Prostate gland (tissue), 2 donors: ENCODE measurements at regions of chr10 and their contacts with region 1.

Region 1: GRCh38 chr10:61903221-61903927 is 1.9 kb downstream of the ARID5B start:
- DNase-seq: peak; percentile 61
- H3K4me3 ChIP-seq: peak overlapping the region; percentile 58 to 85
- H3K27ac ChIP-seq: peak overlapping the region; percentile 98
- H3K4me1 ChIP-seq: peaks cover 2% of the 10 kb centered on the region
- H3K27me3 ChIP-seq: no peaks in the 10 kb centered on the region
- CTCF ChIP-seq: peak in 2 of 4 experiments; percentile 21 to 37
- POLR2A ChIP-seq: no peak

Region 2: DNA sequence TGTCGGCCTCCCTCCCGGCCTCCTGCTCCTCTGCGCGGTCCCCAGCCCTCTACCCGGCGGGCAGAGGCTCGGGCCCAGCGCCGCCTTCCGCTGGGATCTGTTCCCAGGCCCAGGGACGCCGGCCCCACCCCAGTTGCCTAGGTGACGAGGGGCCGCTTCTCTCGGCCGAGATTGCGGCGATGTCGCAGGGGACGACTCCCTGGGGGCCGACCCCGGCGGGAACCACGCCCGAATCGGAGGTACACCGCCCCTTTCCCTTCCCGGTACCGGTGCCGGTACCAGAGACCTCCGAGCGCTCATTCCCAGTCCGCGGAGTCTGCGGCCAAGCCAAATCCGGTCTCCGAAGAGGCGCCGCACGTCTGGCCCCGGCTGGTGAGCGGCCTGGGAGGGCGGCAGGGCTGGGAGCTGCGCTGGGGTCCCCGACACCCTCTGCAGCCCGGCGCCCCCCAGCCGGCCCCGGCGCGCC is 240.5 kb before region 1 on chr10 and contains the start of gene CABCOCO1:
- intact Hi-C with region 1: loop called (anchors 10 kb)
- DNase-seq: peak; percentile 67
- H3K4me3 ChIP-seq: peak within 1 kb of the TSS; percentile 45 to 61
- H3K27ac ChIP-seq: peak within 1 kb of the TSS; percentile 27 to 35
- H3K4me1 ChIP-seq: no peaks in the 10 kb centered on the region
- H3K27me3 ChIP-seq: no peaks in the 10 kb centered on the region
- CTCF ChIP-seq: peak in 1 of 4 experiments; percentile 30
- POLR2A ChIP-seq: no peak
- total RNA-seq, gene CABCOCO1: 1.0 to 1.9 TPM

Region 3: DNA sequence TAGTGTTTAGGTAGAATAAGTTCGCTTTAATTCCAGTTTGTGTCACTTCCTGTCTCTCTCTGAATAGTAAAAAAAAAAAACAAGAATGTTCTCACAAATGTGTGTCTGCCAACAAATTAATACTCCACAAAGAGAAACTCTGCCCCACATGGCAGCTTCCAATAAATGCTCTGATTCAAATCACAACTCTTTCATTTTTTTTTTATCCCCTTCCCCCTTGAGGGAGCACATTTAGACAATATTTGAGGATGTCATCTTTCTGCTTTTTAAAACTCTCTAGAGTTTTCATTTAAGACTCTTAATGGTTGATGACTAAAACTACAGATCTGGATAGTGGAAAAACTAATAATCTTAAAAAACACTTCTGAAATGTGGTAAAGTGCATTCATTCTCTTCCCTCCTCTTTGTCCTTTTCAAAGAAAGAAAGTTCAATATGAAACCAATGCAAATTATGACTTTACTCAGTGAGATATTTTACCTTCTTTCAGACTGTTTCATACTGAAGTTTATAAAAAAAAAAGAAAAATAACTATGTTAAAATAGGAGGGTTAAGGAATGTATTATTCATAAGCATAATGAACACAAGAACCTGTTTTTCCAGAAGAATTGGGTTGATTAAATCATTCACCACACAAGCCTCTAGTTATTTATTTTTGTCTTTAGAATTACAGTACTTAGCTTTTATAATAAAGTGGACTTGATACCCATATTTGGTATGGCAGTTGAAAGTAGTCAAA is 40.5 kb after region 1 on chr10:
- intact Hi-C with region 1: loop called (anchors 5 kb)
- DNase-seq: no peak
- H3K4me3 ChIP-seq: no peak overlapping the region
- H3K27ac ChIP-seq: peak overlapping the region; percentile 77 to 80
- H3K4me1 ChIP-seq: no peaks in the 10 kb centered on the region
- H3K27me3 ChIP-seq: no peaks in the 10 kb centered on the region
- CTCF ChIP-seq: no peak
- POLR2A ChIP-seq: no peak

Region 4: GRCh38 chr10:62048919-62049623 is 145.7 kb after region 1 on chr10:
- intact Hi-C with region 1: loop called (anchors 5 kb)
- DNase-seq: peak; percentile 85
- H3K4me3 ChIP-seq: peak overlapping the region; percentile 30 to 32
- H3K27ac ChIP-seq: peak overlapping the region; percentile 85 to 87
- H3K4me1 ChIP-seq: peaks cover 13% of the 10 kb centered on the region
- H3K27me3 ChIP-seq: no peaks in the 10 kb centered on the region
- CTCF ChIP-seq: no peak
- POLR2A ChIP-seq: peak; percentile 85

Region 5: DNA sequence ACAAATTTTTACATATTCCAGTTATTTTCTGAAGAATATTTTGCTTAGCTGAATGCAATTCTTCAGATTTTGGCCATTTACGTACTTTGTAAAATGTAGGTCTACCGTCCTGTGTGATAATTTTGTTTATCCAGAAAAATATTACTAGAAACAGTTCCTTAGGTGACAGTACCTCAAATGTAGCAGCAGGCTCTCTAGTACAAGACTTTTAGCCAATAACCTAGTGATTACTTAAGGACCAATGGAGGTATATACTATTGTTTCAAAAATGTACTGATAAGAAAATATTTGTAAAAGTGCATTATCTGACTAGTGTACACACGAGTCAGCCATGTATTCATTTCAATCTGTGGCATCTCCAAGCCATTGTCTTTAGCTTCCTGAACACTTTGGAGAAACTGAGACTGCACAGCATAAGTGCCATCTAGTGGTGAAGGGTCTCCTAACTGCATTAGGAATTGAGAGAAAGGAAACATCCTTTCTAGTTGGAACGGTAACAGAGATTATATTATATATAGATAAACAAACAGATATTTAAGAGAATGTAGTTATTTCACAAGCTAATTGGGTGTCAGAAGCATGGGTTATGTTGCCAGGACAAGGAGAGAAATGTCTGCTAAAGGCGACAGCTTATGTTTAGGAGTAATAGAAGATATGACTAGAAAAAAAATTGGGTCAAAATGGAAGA is 341.6 kb after region 1 on chr10:
- intact Hi-C with region 1: loop called (anchors 5 kb)
- DNase-seq: peak; percentile 67
- H3K4me3 ChIP-seq: no peak overlapping the region
- H3K27ac ChIP-seq: no peak overlapping the region
- H3K4me1 ChIP-seq: no peaks in the 10 kb centered on the region
- H3K27me3 ChIP-seq: no peaks in the 10 kb centered on the region
- CTCF ChIP-seq: peak; percentile 65 to 91 (median 86)
- POLR2A ChIP-seq: no peak